SK-N-SH (cell line): ENCODE measurements at regions of chr11 and their contacts with region 1.

Region 1: GRCh38 chr11:119363851-119364590 is 17.5 kb downstream of the USP2 start:
- DNase-seq: peak; percentile 97
- H3K4me3 ChIP-seq: peak overlapping the region in 1 of 2 experiments; percentile 49; a peak in 2 of 4 replicates
- H3K27ac ChIP-seq: no peak overlapping the region; a peak in 1 of 4 replicates
- H3K4me1 ChIP-seq: peaks cover 37 to 69% of the 10 kb centered on the region in 2 experiments; a peak in 3 of 4 replicates
- H3K27me3 ChIP-seq: no peaks in the 10 kb centered on the region
- CTCF ChIP-seq: no peak
- EP300 ChIP-seq: no peak
- RAD21 ChIP-seq: no peak

Region 2: GRCh38 chr11:119339589-119340343 is 24.3 kb before region 1 on chr11:
- CTCF ChIA-PET with region 1: interaction called, 191 read pairs
- POLR2A ChIA-PET with region 1: interaction called, 3 read pairs
- DNase-seq: peak; percentile 95
- H3K4me3 ChIP-seq: peak overlapping the region; percentile 37 to 49; a peak in 3 of 4 replicates
- H3K27ac ChIP-seq: no peak overlapping the region; a peak in 1 of 4 replicates
- H3K4me1 ChIP-seq: peaks cover 16 to 41% of the 10 kb centered on the region in 2 experiments; a peak in 3 of 4 replicates
- H3K27me3 ChIP-seq: no peaks in the 10 kb centered on the region
- CTCF ChIP-seq: peak; percentile 75
- EP300 ChIP-seq: no peak
- RAD21 ChIP-seq: peak; percentile 44; the same call in 1 of the 2 replicates

Region 3: DNA sequence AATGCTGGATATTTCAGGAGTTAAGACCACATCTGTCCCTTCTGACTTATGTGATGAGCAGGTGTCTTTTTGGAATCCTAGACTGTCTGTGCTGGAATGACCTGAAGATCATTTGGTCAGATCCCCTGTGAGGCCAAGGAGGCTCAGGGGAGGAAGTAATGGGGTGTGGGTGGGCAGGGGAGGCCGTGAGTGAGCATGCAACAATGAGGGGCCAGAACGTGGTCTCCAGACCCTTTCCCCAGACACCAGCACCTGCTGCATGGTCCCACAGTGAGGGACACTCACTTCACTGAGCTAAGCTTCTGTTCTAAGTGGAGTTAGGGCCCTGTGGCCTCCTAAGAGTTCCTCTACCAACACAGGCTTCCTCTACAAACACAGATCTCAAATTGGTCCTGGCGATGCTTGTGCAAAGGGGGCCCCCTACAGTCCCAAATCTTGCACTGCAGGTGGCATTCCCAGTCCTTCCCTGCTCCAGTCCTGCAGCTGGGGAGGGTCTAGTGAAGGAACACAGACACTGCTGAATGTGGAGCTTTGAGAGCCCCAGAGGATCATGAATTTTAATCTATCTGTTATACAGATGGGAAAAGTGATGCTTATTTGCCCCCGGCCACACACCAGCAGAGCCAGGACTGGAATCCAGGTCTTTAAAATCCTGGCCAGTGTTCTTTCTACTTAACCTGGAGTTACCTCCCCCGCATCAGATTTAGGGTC is 10.1 kb after region 1 on chr11:
- CTCF ChIA-PET with region 1: interaction called, 308 read pairs
- POLR2A ChIA-PET with region 1: no interaction called
- DNase-seq: peak; percentile 84
- H3K4me3 ChIP-seq: peak overlapping the region in 1 of 2 experiments; percentile 27; a peak in 2 of 4 replicates
- H3K27ac ChIP-seq: peak overlapping the region in 1 of 2 experiments; percentile 98; a peak in 2 of 4 replicates
- H3K4me1 ChIP-seq: peaks cover 9 to 94% of the 10 kb centered on the region in 2 experiments
- H3K27me3 ChIP-seq: no peaks in the 10 kb centered on the region
- CTCF ChIP-seq: peak; percentile 88
- EP300 ChIP-seq: peak in 1 of 2 experiments; percentile 26; a peak in 1 of 4 replicates
- RAD21 ChIP-seq: peak; percentile 96

Region 4: DNA sequence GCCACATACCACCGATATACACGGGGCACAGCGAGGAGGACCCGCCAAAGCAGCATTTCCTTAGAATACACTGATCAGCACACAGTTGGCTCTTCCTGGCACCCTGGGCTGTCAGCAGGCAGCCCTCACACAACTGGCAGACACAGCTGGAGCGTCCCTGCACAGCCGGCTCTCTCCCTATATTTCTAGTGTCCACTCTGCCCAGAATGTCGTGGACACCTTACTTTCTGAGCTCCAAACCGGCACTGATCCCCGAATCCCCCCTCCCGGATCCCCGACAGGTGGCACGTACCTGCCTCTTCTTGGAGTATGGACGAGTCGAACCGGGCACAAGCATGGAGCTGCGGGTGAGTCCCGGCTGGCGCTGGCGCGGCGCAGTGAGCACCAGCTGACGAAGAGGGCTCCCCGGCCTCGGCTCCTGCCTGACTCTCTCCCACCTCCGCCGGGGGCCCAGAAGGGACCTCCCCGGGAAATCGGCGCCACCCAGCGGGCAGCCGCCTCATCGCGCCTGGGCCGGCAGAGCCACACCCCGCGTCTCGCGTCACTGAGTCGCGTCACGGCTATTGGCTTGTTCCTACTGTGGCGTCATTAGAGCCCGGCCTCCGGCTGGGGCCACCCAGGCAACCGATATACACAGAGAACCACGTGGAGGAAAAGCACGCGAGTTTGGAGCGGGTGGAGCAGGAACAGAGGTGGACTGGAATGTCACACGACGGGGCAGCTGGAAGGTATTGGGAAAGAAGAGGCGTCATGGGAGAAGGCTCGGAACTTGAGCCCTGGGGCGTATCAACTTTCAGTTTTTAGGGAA is 17.4 kb after region 1 on chr11 and contains the start of gene USP2:
- CTCF ChIA-PET with region 1: interaction called, 308 read pairs
- POLR2A ChIA-PET with region 1: no interaction called
- DNase-seq: peak; percentile 96
- H3K4me3 ChIP-seq: peak within 1 kb of the TSS; percentile 57 to 62
- H3K27ac ChIP-seq: peak within 1 kb of the TSS in 1 of 2 experiments; percentile 31; a peak in 1 of 4 replicates
- H3K4me1 ChIP-seq: peaks cover 4 to 42% of the 10 kb centered on the region in 2 experiments; a peak in 3 of 4 replicates
- H3K27me3 ChIP-seq: no peaks in the 10 kb centered on the region
- CTCF ChIP-seq: peak; percentile 83
- EP300 ChIP-seq: no peak
- RAD21 ChIP-seq: peak; percentile 70
- polyA plus RNA-seq, gene USP2: 0.81 and 0.97 TPM in 2 replicates